Activated CD4-positive, alpha-beta T cell treated with anti-CD3 and anti-CD28 coated beads for 36 hours (primary cell): ENCODE measurements at regions of chr2 and their contacts with region 1.

Region 1: GRCh38 chr2:61538200-61538919 is at the start of gene XPO1:
- DNase-seq: peak; percentile 100
- ATAC-seq: peak; percentile 85
- H3K4me3 Mint-ChIP-seq: peak within 1 kb of the TSS; percentile 95
- H3K27ac Mint-ChIP-seq: peak within 1 kb of the TSS; percentile 100
- H3K4me1 Mint-ChIP-seq: peaks cover 22% of the 10 kb centered on the region
- H3K27me3 Mint-ChIP-seq: no peaks in the 10 kb centered on the region
- total RNA-seq, gene XPO1: 187 to 214 TPM

Region 2: DNA sequence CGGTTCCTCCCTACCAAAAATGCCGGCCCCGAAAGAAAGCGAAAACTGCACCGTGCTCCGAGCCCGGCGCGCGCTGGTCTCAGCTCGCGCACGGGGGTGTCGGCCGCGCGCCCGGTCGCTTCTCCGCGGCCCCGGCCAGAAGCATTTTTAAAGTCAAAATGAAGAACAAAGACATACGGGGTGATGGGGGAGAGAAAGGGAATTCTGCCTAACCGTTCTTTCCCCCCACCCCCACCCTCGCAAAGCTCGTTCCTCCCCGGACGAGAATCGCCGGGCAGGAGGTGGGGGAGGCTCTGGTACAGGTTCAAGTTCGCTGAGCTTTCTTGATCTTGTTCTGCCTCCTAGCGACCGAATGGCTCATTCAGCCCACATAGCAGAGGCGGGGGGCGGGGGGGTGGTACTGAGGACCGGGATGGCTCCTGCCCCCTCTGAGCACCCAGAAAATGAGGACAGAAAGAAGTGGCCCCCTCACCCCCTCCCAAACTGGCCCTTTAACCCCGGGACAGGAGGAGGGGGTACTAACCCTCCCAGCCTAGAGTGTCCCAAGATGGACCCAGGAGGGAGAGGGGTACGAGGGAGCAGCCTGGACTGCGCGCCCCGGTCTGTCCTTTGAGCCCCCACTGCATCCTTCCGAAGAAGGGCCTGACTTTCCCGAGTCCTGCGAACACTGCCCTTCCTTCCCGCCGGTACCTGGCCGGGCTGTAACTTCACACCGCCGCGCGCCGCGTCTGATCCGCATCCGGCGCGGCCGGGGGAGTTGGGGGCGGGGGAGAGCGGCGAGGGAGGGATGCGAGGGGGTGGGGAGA is 988.0 kb before region 1 on chr2:
- CTCF ChIA-PET with region 1: no interaction called
- POLR2A ChIA-PET with region 1: no interaction called
- intact Hi-C with region 1: loop called in 1 of 2 experiments (anchors 10 kb)
- DNase-seq: peak; percentile 77
- ATAC-seq: peak; percentile 67
- H3K4me3 Mint-ChIP-seq: peak overlapping the region; percentile 81
- H3K27ac Mint-ChIP-seq: peak overlapping the region; percentile 72
- H3K4me1 Mint-ChIP-seq: peaks cover 33% of the 10 kb centered on the region
- H3K27me3 Mint-ChIP-seq: peaks cover 47% of the 10 kb centered on the region

Region 3: GRCh38 chr2:60881047-60881932 is 657.1 kb before region 1 on chr2 and contains the start of gene REL:
- CTCF ChIA-PET with region 1: no interaction called
- POLR2A ChIA-PET with region 1: no interaction called
- intact Hi-C with region 1: loop called in 1 of 2 experiments (anchors 1 kb)
- DNase-seq: peak; percentile 95
- ATAC-seq: peak; percentile 84
- H3K4me3 Mint-ChIP-seq: peak within 1 kb of the TSS; percentile 91
- H3K27ac Mint-ChIP-seq: peak within 1 kb of the TSS; percentile 98
- H3K4me1 Mint-ChIP-seq: peaks cover 25% of the 10 kb centered on the region
- H3K27me3 Mint-ChIP-seq: no peaks in the 10 kb centered on the region
- total RNA-seq, gene REL: 42.7 to 55.9 TPM

Region 4: DNA sequence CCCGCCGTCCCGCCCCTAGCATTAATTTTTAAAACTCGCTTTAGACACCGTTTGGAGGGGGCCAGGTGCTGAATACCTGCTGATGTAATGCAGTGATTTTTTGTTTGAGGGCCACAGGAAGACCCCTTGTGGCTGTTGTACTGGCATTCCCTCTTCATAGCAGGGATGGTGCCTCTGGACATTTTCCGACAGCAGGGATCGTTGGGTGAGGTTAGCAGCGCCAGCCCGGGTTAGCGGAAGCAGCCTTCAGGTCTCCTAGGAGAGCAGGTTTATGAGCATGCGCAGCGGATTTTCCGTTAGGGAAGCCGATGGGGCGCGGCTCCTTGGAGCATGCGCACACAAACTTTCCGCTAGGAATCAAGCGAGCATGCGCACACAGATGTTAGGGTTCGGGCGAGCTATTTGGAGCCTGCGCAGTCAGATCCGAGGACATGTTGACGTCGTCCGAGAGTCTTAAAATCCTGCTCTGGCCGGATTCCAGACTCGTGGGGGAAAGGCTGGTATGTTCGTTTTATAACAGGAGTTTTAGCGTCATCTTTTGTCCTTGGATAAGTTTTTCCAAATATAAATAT is 393.6 kb before region 1 on chr2:
- CTCF ChIA-PET with region 1: no interaction called
- POLR2A ChIA-PET with region 1: no interaction called
- intact Hi-C with region 1: loop called in 1 of 2 experiments (anchors 1 kb)
- DNase-seq: peak; percentile 96
- ATAC-seq: peak; percentile 99
- H3K4me3 Mint-ChIP-seq: peak overlapping the region; percentile 98
- H3K27ac Mint-ChIP-seq: peak overlapping the region; percentile 96
- H3K4me1 Mint-ChIP-seq: peaks cover 4% of the 10 kb centered on the region
- H3K27me3 Mint-ChIP-seq: no peaks in the 10 kb centered on the region

Region 5: GRCh38 chr2:61380056-61380881 is 158.1 kb before region 1 on chr2:
- CTCF ChIA-PET with region 1: no interaction called
- POLR2A ChIA-PET with region 1: no interaction called
- intact Hi-C with region 1: no loop called
- DNase-seq: no peak
- ATAC-seq: no peak
- H3K4me3 Mint-ChIP-seq: no peak overlapping the region
- H3K27ac Mint-ChIP-seq: no peak overlapping the region
- H3K4me1 Mint-ChIP-seq: no peaks in the 10 kb centered on the region
- H3K27me3 Mint-ChIP-seq: no peaks in the 10 kb centered on the region

Region 6: DNA sequence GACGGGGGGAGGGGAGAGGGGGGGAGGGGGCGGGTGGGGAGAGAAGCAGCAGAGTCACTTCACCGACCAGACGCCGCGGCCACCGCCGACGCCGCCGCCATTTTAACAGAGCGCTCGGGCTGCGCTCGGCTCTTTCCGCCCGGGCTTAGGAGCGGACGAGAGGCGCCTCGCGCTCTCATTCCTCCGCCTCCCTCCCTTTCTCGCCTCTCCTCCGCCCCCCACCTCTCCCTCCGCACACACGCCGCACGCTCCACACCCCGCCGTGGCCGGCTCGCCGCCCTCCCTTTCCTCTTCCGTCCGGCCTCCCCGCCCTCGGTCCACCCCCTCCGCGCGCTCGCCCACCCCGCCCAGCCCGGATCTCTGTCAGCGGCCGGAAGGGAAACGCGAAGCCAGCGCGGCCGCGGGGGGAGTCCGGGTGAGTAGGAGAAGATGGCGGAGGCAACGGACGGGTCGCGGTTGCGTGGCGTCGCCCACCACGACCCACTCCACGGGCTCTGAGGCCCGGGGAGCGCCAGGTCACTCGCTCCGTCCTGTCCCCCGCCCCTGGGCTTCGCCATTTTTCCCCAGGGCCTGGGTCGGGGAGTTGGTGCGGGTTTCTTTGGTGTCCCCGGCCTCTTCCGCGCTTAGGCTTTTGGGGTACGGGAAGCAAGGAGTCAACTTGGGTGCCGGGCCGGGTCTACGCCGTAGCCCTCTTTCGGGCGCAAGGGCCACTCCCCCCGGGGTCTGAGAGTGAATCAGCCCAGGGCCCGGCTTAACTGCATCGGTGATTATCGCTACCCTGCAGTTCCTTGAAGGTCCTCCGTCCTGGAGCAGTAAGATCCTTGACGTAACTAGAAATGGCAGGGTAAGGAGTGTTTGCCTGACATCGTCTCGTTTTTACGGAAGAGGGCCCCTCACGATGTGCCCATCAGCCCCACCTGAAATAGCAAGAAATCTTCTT is 67.1 kb before region 1 on chr2 and contains the start of gene USP34:
- CTCF ChIA-PET with region 1: no interaction called
- POLR2A ChIA-PET with region 1: interaction called, 7 read pairs
- intact Hi-C with region 1: loop called (anchors 1 kb)
- DNase-seq: peak; percentile 97
- ATAC-seq: peak; percentile 91
- H3K4me3 Mint-ChIP-seq: peak within 1 kb of the TSS; percentile 83
- H3K27ac Mint-ChIP-seq: peak within 1 kb of the TSS; percentile 94
- H3K4me1 Mint-ChIP-seq: peaks cover 29% of the 10 kb centered on the region
- H3K27me3 Mint-ChIP-seq: no peaks in the 10 kb centered on the region
- total RNA-seq, gene USP34: 63.7 to 67.6 TPM

Region 7: GRCh38 chr2:61626827-61627226 is 88.5 kb after region 1 on chr2:
- CTCF ChIA-PET with region 1: no interaction called
- POLR2A ChIA-PET with region 1: no interaction called
- intact Hi-C with region 1: no loop called
- DNase-seq: no peak
- ATAC-seq: no peak
- H3K4me3 Mint-ChIP-seq: no peak overlapping the region
- H3K27ac Mint-ChIP-seq: no peak overlapping the region
- H3K4me1 Mint-ChIP-seq: no peaks in the 10 kb centered on the region
- H3K27me3 Mint-ChIP-seq: peaks cover 2% of the 10 kb centered on the region

Region 8: GRCh38 chr2:61764035-61764800 is 225.9 kb after region 1 on chr2:
- CTCF ChIA-PET with region 1: no interaction called
- POLR2A ChIA-PET with region 1: interaction called, 4 read pairs
- intact Hi-C with region 1: loop called (anchors 1 kb)
- DNase-seq: peak; percentile 99
- ATAC-seq: peak; percentile 97
- H3K4me3 Mint-ChIP-seq: peak overlapping the region; percentile 93
- H3K27ac Mint-ChIP-seq: peak overlapping the region; percentile 95
- H3K4me1 Mint-ChIP-seq: peaks cover 15% of the 10 kb centered on the region
- H3K27me3 Mint-ChIP-seq: no peaks in the 10 kb centered on the region

Region 9: DNA sequence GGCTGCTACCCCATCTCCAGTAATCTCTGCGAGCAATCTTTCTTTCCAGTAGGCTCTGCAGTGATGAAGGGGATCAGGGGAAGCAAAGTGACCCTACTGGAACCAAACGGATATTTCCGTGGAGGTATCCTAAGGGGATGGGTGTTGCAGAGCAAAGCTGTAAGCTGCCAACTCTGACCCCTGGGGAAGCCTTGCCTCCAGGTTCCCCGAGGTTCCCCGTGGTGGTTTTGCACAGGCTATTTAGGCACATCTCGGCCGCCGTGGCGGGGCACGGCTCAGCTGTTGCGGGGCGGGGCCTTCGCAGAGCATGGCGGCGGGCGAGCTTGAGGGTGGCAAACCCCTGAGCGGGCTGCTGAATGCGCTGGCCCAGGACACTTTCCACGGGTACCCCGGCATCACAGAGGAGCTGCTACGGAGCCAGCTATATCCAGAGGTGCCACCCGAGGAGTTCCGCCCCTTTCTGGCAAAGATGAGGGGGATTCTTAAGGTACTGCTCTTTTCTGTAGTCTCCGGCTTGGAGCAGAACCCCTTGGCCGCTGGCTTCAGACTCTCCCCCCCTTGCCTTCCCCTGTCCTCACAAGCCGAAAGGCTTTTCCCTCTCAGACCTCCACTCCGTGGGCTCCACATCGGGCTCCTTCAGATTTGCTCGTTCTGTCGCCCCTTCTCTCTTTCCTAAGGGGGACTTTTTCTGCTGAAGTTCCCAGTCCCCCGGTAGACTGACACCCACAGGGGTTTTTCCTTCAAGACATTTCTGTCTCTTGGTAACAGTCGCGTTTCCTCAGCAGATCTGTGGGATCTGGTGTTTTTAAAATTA is 367.2 kb after region 1 on chr2 and contains the start of gene COMMD1:
- CTCF ChIA-PET with region 1: no interaction called
- POLR2A ChIA-PET with region 1: no interaction called
- intact Hi-C with region 1: loop called in 1 of 2 experiments (anchors 5 kb)
- DNase-seq: peak; percentile 93
- ATAC-seq: peak; percentile 99
- H3K4me3 Mint-ChIP-seq: peak within 1 kb of the TSS; percentile 96
- H3K27ac Mint-ChIP-seq: peak within 1 kb of the TSS; percentile 80
- H3K4me1 Mint-ChIP-seq: peaks cover 9% of the 10 kb centered on the region
- H3K27me3 Mint-ChIP-seq: no peaks in the 10 kb centered on the region
- total RNA-seq, gene COMMD1: 29.3 to 36.1 TPM